ENCODE measurements at regions of chr2 and their contacts with region 1.

Region 1: DNA sequence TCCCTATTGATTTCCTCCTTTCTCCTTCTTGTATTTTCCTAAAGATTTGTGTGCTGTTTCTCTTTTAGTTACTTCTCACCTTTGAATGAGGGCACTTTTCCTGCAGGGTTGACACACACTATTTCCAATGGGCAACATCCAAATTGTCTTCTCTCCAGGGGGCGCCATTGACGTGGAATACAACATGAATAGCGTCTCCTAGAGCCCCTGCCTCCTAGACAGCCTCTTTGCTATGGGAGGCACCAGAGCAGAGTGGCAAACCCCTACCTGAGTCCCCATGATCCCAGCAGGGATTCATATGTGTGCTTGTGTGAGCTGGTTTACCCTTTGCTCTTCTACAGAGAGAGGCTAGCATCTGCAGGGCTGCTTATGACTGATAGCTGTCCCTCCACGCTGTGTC is 61.3 kb upstream of the ITSN2 start:
- DNase-seq: peak; percentile 74
- H3K4me3 Mint-ChIP-seq: no peak overlapping the region
- H3K27ac Mint-ChIP-seq: no peak overlapping the region
- H3K4me1 Mint-ChIP-seq: peaks cover 2% of the 10 kb centered on the region
- H3K27me3 Mint-ChIP-seq: no peaks in the 10 kb centered on the region

Region 2: DNA sequence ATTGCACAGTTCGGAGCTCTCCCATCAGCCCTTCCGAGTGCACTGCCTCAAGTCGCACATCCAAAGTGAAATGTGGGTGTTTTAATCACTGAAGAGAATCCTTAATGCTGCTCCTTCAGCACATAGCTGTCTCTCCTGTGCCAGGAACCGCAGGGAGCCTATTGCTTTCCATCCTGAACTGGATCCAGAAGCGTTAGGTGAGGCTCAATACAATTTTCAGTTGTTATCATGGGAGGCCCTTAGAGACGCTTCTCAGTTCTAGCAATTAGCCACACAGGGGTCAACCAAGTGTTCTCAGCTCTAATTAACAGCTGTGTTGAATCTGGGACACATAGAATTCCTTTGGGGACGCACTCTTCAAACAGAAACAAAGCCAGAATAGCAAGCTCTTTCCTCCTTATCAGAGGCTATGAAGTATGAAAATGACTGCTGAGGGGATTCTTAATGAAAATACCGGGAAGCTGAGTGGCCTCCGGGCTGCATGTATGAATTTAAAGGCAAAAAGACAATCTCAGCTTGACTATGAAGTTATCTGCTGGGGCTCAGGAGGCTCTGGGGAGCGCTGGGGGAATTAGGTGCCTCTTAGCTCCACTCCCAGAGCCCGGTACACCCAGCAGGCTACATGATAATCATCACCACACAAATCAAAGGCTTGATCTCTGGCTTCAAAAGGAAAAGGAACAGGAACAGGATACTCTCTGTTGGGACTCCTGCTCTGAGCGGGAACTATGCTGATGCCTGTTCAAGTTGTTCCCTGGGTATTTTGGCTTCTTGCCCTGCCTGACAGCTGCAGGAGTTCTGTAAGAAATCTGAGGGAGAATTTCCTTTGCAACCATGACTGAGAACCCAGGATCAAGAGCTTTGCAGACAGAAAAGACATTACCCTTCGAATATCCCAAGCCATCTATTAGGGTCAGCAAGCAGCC is 14.0 kb after region 1 on chr2:
- CTCF ChIA-PET with region 1: interaction called, 13 read pairs
- POLR2A ChIA-PET with region 1: no interaction called
- intact Hi-C with region 1: no loop called
- DNase-seq: no peak
- H3K4me3 Mint-ChIP-seq: no peak overlapping the region
- H3K27ac Mint-ChIP-seq: no peak overlapping the region
- H3K4me1 Mint-ChIP-seq: no peaks in the 10 kb centered on the region
- H3K27me3 Mint-ChIP-seq: no peaks in the 10 kb centered on the region

Region 3: GRCh38 chr2:24543252-24543651 is 121.6 kb after region 1 on chr2:
- CTCF ChIA-PET with region 1: interaction called, 5 read pairs
- POLR2A ChIA-PET with region 1: no interaction called
- intact Hi-C with region 1: loop called (anchors 1 kb)
- DNase-seq: no peak
- H3K4me3 Mint-ChIP-seq: no peak overlapping the region
- H3K27ac Mint-ChIP-seq: no peak overlapping the region
- H3K4me1 Mint-ChIP-seq: peaks cover 27% of the 10 kb centered on the region
- H3K27me3 Mint-ChIP-seq: no peaks in the 10 kb centered on the region

Region 4: DNA sequence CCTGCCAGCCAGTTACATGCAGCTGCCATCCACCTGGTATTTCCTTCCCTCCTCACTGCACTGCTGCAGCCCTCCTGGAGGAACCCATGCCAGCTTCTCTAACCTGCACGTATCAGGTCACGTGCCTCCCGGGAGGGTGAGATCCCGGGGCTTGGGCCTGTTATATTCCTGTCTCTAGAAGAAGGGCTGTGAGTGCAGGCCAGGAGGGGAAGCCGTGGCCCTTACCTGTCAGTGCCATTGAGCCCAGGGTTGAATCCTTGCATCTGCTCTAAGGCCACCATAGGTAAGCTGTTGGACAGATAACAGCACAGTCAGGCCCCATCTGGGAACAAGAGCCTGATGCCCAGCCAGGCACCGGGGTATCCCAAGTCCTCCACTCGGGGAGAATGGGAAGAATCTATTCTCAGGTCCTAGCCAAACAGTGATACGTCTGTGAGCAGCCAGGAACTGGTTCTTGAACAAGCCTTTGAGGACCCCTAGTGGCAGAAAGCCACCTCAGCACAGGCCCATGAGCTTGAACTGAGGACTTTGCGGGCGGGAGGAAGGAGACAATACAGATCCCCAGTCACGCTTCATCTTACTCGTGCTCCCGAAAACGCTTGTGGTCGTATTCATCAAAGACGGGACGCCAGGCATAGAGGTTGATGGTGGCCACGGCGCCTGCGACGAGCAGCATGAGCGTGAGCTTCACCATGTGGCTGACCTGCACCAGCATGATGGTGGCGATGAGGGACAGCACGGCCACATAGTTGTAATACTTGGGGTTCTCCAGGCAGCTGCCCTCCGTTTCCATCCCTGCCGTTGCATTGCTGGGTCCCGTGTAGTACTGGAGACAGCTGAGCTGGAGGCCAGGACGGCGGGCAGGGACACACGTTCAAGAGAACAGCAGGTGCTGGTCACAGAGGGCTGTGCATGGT is 405.9 kb after region 1 on chr2:
- CTCF ChIA-PET with region 1: interaction called, 58 read pairs
- POLR2A ChIA-PET with region 1: interaction called, 4 read pairs
- intact Hi-C with region 1: loop called (anchors 1 kb)
- DNase-seq: peak; percentile 81
- H3K4me3 Mint-ChIP-seq: no peak overlapping the region
- H3K27ac Mint-ChIP-seq: peak overlapping the region; percentile 3
- H3K4me1 Mint-ChIP-seq: peaks cover 25% of the 10 kb centered on the region
- H3K27me3 Mint-ChIP-seq: no peaks in the 10 kb centered on the region